Left cardiac atrium (tissue), 4 donors: ENCODE measurements at regions of chr18 and their contacts with region 1.

Region 1: GRCh38 chr18:22223254-22223960 is 54.0 kb downstream of the GATA6 start:
- DNase-seq: peak; percentile 93
- ATAC-seq: peak; percentile 83 to 99

Region 2: DNA sequence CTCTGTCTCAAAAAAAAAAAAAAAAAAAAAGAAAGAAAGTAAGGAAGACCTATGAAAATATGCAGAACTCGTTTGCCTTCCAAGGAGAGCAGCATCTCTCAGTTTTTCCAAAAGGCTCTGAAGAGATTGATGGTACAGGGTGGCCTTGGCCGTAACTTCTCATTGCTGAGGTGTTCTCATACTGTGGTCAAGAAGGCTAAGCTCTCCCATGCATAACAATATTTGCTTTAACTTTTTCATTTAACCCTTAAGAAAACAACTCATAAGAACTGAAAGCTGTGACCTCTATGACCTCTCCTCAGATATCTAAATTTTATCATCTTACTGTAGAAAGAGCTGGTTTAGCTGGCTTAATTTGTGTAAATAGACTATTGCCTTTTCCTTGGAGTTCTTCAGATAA is 91.1 kb before region 1 on chr18:
- intact Hi-C with region 1: no loop called
- DNase-seq: no peak
- ATAC-seq: no peak

Region 3: GRCh38 chr18:22152134-22152533 is 71.3 kb before region 1 on chr18:
- intact Hi-C with region 1: no loop called
- DNase-seq: no peak
- ATAC-seq: no peak

Region 4: DNA sequence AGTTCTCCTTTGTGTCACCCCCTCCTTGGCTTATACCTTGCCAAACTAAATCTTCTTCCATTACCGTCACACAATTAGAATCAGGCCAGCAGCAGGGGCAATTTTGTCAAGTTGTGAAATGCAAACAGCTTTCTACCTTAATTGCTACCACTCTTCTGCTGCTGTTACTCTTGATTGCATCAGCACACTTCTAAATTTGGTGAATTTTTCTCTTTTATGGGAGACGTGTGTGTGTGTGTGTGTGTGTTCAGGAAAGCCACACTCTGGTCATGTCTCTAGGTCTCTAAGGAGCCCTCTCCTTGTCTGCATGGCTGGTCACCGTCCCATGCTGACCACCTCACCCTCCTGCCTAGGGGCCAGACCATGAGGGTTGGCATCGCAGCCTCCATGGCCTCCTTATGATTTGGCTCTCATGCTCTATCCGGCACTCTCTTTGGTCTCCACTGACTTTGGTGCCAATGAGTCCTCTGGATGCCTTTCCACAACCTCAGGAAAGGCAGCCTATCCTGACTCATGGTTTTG is 33.7 kb after region 1 on chr18:
- intact Hi-C with region 1: loop called in 1 of 2 experiments (anchors 5 kb)
- DNase-seq: no peak
- ATAC-seq: no peak